Esophagus squamous epithelium (tissue), 5 donors: ENCODE measurements at regions of chr12 and their contacts with region 1.

Region 1: DNA sequence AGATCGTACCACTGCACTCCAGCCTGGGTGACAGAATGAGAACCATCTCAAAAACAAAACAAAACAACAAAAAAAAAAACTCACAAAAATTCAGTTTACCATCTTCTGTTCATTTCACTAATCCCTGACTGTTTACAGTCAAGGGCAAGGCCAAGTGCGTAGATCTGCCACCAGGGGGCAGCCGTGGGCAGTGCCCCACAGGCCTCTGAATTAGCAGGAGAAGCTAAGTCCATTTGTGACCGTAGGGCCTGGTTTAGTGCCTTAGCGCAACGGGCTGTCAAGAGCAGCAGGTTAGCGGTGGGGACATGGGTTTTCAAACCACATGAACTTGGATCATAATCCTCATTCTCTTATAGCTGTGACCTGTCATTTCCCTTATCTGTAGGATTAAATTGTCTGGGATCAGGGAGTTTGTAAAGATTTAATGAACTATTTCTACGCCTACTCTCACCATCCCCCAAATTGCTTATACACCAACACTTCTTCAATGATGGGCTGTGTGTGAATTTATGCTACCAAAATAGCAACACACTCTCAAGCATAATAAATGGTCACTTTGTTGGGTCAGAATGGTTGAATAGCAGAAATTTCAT is 49.0 kb downstream of the KCTD10 start:
- DNase-seq: no peak
- H3K4me3 ChIP-seq: no peak overlapping the region
- H3K27ac ChIP-seq: no peak overlapping the region
- H3K4me1 ChIP-seq: peaks cover 2 to 5% (median 5%) of the 10 kb centered on the region in 3 donors
- H3K27me3 ChIP-seq: peaks cover 0 to 4% (median 0%) of the 10 kb centered on the region in 4 donors
- CTCF ChIP-seq: peak; percentile 82 to 98 (median 91)
- POLR2A ChIP-seq: no peak

Region 2: DNA sequence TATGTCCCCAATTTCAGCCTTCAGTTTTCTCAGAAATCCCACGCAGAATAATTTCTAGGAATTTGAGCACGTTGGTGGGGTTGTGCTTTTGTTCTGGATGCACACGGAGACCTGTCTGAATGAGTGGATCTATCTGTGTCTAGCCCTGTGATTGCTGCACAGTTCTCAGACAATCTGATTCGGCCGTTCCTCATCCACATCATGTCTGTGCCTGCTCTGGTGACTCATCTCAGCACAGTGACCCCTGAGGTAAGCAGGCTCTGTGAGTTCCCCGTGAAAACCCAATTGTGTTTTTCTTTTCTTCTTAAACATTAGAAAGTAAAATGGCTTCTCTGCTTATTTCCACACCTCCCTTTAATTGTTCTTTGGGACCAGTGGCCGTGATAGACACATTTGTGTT is 69.5 kb after region 1 on chr12:
- intact Hi-C with region 1: loop called (anchors 10 kb)
- DNase-seq: no peak
- H3K4me3 ChIP-seq: no peak overlapping the region
- H3K27ac ChIP-seq: no peak overlapping the region
- H3K4me1 ChIP-seq: peaks cover 0 to 9% (median 6%) of the 10 kb centered on the region in 3 donors
- H3K27me3 ChIP-seq: no peaks in the 10 kb centered on the region
- CTCF ChIP-seq: no peak
- POLR2A ChIP-seq: no peak

Region 3: DNA sequence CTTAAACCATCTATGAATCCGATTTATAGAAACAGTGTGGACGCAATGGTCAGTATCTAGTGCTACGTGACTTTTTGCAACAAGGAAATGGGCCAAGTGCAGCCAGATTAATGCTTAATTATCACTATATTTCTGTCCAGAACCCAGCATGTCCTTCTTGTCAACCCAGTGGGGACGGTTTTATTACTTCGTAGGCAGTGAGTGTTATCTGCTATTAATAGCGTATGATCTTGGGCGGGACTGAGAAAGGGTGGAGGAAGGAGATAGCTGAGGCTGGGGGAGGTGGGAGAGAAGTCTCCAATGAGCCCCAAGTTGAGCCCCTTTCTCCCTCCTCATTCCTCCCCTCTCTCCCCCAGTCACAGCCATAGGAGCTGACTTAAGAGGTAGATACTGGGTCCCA is 225.8 kb after region 1 on chr12:
- intact Hi-C with region 1: no loop called
- DNase-seq: no peak
- H3K4me3 ChIP-seq: no peak overlapping the region
- H3K27ac ChIP-seq: no peak overlapping the region
- H3K4me1 ChIP-seq: peaks cover 0 to 2% (median 1%) of the 10 kb centered on the region in 3 donors
- H3K27me3 ChIP-seq: peaks cover 0 to 61% (median 0%) of the 10 kb centered on the region in 4 donors
- CTCF ChIP-seq: no peak
- POLR2A ChIP-seq: no peak